ENCODE measurements at regions of chr11 and their contacts with region 1.

Region 1: GRCh38 chr11:8717876-8718753 is 35.5 kb downstream of the RPL27A start:
- DNase-seq: peak; percentile 90
- H3K4me3 ChIP-seq: peak overlapping the region; percentile 53
- CTCF ChIP-seq: no peak

Region 2: DNA sequence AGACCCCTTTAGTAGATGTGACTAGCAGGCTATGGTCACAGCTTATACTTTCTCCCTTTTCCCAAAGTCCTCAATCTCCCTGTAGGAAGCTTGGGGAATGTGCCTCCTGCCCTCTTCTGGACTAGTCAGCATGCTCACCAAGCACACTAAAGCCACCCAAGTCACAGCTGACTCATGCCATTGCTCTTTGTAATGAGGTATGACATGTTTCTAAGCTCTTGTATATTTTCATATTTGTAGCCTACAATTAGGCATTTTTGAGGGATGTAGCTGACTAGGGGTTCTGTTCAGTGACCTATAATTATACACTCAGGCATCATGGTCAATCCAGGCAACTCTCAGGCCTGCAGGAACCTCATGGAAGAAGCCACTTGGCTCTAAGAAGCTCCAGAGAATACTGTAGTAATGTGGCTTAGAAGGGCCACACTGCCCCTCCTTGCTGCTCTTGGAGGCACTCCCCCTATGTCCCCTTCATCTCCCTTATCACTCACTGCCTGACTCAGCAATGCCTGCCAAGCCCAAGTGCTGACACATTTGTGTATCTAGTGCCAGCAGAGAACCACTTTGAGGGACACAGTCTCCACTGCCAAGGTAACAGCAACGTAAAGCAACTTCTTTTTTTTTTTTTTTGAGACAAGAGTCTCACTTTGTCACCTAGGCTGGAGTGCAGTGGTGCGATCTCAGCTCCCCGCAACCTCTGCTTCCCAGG is 50.7 kb after region 1 on chr11:
- CTCF ChIA-PET with region 1: interaction called, 4 read pairs
- POLR2A ChIA-PET with region 1: interaction called, 11 read pairs
- DNase-seq: peak; percentile 63
- H3K4me3 ChIP-seq: no peak overlapping the region
- CTCF ChIP-seq: peak; percentile 54

Region 3: DNA sequence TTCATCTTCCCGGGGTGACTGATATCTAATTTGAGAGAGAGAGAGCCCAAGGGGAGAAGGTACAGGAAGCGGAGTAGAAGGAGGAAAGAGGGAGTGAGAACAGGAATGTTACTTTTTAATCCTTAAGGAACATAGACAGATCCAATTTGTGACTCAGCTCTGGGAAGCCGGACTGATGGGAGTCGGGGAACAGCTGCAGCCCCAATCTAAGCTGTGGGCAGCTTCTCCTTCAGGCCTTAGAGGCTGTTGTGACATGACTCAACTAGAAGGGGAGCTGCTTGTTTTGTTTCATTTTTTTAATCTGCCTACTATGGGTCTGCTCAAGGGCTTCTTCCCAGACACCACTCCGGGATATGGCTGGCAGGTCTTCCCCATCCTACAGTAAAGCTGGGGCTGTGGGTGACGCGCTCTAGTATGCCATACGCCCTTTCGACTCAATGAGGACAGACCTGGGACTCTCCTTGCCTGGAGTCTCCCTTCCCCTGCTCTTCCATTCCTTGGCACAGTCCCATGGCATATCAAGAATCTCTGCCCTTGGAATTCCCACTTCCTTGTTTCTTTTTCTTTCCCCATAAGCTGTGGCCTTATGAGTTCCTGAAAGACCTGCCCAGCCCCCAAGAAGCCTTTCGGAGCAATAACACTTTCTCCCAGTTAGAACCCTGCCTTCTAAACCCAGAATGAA is 89.6 kb after region 1 on chr11:
- CTCF ChIA-PET with region 1: interaction called, 4 read pairs
- POLR2A ChIA-PET with region 1: interaction called, 16 read pairs
- DNase-seq: no peak
- H3K4me3 ChIP-seq: peak overlapping the region; percentile 81
- CTCF ChIP-seq: no peak